ENCODE measurements at regions of chr13 and their contacts with region 1.

Region 1: DNA sequence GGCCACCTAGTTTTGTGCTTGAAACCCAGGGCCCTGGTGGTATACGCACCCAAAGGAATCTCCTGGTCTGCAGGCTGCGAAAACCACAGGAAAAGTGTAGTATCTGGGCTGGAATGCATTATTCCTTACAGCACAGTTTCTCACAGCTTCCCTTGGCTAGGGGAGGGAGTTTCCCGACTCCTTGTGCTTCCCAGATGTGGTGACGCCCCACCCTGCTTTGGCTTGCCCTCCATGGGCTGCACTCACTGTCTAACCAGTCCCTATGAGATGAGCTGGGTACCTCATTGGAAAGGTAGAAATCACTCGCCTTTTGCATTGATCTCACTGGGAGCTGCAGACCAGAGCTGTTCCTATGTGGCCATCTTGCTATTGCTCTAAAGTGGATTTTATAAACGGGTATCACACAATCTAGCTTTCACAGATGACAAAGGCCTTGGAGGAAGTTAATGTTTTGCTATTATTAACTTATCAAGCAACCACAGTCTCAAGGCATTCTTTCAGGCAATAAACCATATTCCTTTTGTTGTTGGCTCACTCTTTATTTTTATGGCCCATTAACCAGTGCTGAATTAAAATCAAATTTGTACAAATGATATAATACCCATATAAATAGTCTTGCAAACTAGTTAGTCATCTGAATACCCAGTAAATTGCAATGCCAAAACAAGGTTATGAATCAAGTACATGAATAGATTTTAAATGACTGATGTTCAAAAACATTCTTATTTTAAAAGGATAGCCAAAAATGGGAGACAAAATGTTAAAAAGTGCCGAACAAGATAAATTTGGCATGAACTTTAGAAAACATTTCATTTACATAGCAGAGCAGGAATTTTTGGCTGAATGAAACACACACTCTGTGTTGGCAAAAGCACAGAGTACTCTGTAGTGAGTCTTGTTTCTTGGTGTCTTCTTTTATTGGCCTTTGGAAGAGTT is 475.4 kb upstream of the ARGLU1 start:
- DNase-seq: no peak
- H3K4me3 Mint-ChIP-seq: no peak overlapping the region
- H3K27ac Mint-ChIP-seq: no peak overlapping the region
- H3K4me1 Mint-ChIP-seq: no peaks in the 10 kb centered on the region
- H3K27me3 Mint-ChIP-seq: no peaks in the 10 kb centered on the region

Region 2: GRCh38 chr13:107534548-107534947 is 491.3 kb after region 1 on chr13:
- CTCF ChIA-PET with region 1: no interaction called
- intact Hi-C with region 1: loop called (anchors 5 kb)
- DNase-seq: no peak
- H3K4me3 Mint-ChIP-seq: no peak overlapping the region
- H3K27ac Mint-ChIP-seq: no peak overlapping the region
- H3K4me1 Mint-ChIP-seq: no peaks in the 10 kb centered on the region
- H3K27me3 Mint-ChIP-seq: no peaks in the 10 kb centered on the region